ENCODE measurements at regions of chr9 and their contacts with region 1.

Region 1: GRCh38 chr9:70285246-70285645 is 26.5 kb downstream of the SMC5 start:
- DNase-seq: no peak
- H3K4me3 Mint-ChIP-seq: no peak overlapping the region
- H3K27ac Mint-ChIP-seq: no peak overlapping the region
- H3K4me1 Mint-ChIP-seq: peaks cover 6% of the 10 kb centered on the region
- H3K27me3 Mint-ChIP-seq: no peaks in the 10 kb centered on the region

Region 2: DNA sequence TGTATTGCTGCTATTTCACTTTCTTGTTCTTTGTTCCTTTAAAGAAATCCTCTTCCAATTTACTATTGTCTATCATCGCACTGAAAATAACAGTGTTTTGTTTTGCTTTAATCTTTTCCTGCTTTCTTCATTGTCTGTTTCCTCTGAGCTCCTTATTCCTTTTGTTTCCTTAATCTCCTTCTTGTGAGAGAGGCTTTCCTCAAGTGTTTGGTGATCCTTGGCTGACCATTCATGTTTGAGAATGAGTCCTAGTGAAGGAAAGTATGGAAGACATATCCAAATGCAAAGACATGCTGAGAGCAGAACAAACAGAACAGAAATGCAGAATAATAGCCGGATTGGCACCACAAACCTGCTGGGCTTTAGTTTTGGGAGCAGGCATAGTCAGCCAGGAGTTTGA is 1002.2 kb before region 1 on chr9:
- intact Hi-C with region 1: loop called (anchors 5 kb)
- DNase-seq: no peak
- H3K4me3 Mint-ChIP-seq: no peak overlapping the region
- H3K27ac Mint-ChIP-seq: no peak overlapping the region
- H3K4me1 Mint-ChIP-seq: peaks cover 9% of the 10 kb centered on the region
- H3K27me3 Mint-ChIP-seq: peaks cover 12% of the 10 kb centered on the region

Region 3: DNA sequence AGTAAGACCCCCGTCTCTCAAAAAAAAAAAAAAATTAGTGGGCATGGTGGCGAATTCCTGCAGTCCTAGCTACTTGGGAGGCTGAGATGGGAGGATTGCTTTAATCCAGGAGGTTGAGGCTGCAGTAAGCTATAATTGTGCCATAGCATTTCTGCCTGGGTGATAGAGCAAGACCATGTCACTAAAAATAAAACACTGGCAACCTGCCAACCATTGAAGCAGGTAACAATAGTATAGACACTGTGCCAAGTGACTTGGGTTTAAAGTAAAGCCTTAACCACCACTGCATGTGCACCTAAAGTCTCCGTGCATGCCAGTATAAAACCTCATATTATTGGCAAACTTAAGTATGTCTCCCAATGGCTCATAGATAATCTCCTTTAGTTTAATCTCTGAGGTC is 609.7 kb before region 1 on chr9:
- intact Hi-C with region 1: no loop called
- DNase-seq: no peak
- H3K4me3 Mint-ChIP-seq: no peak overlapping the region
- H3K27ac Mint-ChIP-seq: no peak overlapping the region
- H3K4me1 Mint-ChIP-seq: peaks cover 7% of the 10 kb centered on the region
- H3K27me3 Mint-ChIP-seq: peaks cover 45% of the 10 kb centered on the region

Region 4: GRCh38 chr9:70324963-70325362 is 39.7 kb after region 1 on chr9:
- intact Hi-C with region 1: loop called (anchors 5 kb)
- DNase-seq: no peak
- H3K4me3 Mint-ChIP-seq: no peak overlapping the region
- H3K27ac Mint-ChIP-seq: no peak overlapping the region
- H3K4me1 Mint-ChIP-seq: no peaks in the 10 kb centered on the region
- H3K27me3 Mint-ChIP-seq: no peaks in the 10 kb centered on the region